Activated CD4-positive, alpha-beta memory T cell treated with anti-CD3 and anti-CD28 coated beads for 36 hours (primary cell): ENCODE measurements at regions of chr17 and their contacts with region 1.

Region 1: GRCh38 chr17:1673041-1673785 is 11.5 kb downstream of the PRPF8 start:
- DNase-seq: peak; percentile 43
- H3K4me3 Mint-ChIP-seq: no peak overlapping the region
- H3K27ac Mint-ChIP-seq: peak overlapping the region; percentile 29
- H3K4me1 Mint-ChIP-seq: peaks cover 19% of the 10 kb centered on the region
- H3K27me3 Mint-ChIP-seq: no peaks in the 10 kb centered on the region

Region 2: DNA sequence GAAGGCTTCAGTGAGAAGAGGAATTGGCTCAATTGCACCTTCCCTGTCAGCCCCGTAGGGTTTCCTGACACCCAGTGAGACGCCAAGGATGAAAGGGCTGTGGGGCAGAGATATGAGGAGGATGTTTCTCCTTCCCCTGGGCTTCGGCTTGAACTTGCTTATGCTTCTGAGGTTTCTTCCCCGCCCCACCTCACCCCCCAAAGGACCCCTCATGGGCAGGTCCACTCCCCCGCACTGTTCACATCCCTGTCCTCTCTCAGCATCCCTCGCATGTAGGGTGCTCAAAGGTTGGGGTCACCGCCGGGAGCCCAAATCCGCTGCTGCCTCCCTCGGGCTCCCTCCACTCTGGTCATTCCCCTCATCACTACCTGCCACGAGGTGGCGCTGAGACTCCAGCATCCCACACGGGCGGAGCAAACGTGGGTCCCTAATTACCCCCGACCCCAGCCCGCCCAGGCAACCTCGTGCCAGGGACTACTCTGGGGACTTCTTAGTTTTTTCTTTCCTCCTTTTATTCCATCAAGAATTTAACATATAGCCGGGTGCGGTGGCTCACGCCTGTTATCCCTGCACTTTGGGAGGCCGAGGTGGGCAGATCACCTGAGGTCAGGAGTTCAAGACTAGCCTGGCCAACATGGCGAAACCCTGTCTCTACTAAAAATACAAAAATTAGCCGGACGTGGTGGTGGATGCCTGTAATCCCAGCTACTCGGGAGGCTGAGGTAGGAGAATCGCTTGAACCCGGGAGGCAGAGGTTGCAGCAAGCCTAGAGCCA is 397.1 kb before region 1 on chr17:
- CTCF ChIA-PET with region 1: no interaction called
- POLR2A ChIA-PET with region 1: no interaction called
- intact Hi-C with region 1: no loop called
- DNase-seq: peak; percentile 79
- H3K4me3 Mint-ChIP-seq: peak overlapping the region; percentile 6
- H3K27ac Mint-ChIP-seq: no peak overlapping the region
- H3K4me1 Mint-ChIP-seq: peaks cover 3% of the 10 kb centered on the region
- H3K27me3 Mint-ChIP-seq: peaks cover 16% of the 10 kb centered on the region

Region 3: DNA sequence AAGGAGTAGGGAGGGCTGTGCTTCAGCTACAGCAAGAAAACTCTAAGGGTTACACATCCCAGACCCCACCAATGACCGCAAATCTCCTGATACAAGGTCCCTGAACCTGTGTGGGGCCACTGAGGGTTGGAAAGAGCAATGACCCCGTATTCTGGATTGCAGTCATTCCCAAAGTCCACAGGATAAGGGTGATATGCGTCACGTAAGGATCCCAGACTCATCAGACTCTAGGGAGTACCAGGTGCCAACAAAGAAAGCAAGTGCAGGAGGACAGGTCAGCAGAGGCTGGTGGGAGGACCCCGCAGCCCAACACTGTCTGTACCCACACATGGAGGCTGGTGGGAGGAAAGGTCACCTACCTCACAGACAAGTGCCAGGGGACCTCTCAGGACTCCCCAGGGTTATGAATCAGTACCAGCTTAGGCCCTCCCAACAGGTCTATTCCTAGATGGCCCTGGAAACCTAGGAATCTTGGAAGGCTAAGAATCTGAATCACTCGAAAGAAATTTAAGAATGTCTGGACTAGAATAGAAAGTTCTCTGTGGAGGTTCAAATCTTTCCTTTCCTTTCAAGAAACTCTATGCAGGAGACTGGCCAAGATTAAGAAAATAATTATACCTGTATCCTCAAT is 126.8 kb before region 1 on chr17:
- CTCF ChIA-PET with region 1: no interaction called
- POLR2A ChIA-PET with region 1: no interaction called
- intact Hi-C with region 1: no loop called
- DNase-seq: no peak
- H3K4me3 Mint-ChIP-seq: no peak overlapping the region
- H3K27ac Mint-ChIP-seq: no peak overlapping the region
- H3K4me1 Mint-ChIP-seq: peaks cover 8% of the 10 kb centered on the region
- H3K27me3 Mint-ChIP-seq: no peaks in the 10 kb centered on the region

Region 4: GRCh38 chr17:1648963-1649843 is 24.0 kb before region 1 on chr17:
- CTCF ChIA-PET with region 1: interaction called, 11 read pairs
- POLR2A ChIA-PET with region 1: no interaction called
- intact Hi-C with region 1: no loop called
- DNase-seq: peak; percentile 95
- H3K4me3 Mint-ChIP-seq: peak overlapping the region; percentile 54
- H3K27ac Mint-ChIP-seq: no peak overlapping the region
- H3K4me1 Mint-ChIP-seq: peaks cover 26% of the 10 kb centered on the region
- H3K27me3 Mint-ChIP-seq: no peaks in the 10 kb centered on the region

Region 5: GRCh38 chr17:1658100-1658499 is 15.1 kb before region 1 on chr17:
- CTCF ChIA-PET with region 1: interaction called, 18 read pairs
- POLR2A ChIA-PET with region 1: no interaction called
- intact Hi-C with region 1: no loop called
- DNase-seq: no peak
- H3K4me3 Mint-ChIP-seq: no peak overlapping the region
- H3K27ac Mint-ChIP-seq: no peak overlapping the region
- H3K4me1 Mint-ChIP-seq: peaks cover 1% of the 10 kb centered on the region
- H3K27me3 Mint-ChIP-seq: no peaks in the 10 kb centered on the region

Region 6: GRCh38 chr17:1684378-1685189 is 11.4 kb after region 1 on chr17 and contains the start of gene PRPF8:
- CTCF ChIA-PET with region 1: interaction called, 19 read pairs
- POLR2A ChIA-PET with region 1: interaction called, 5 read pairs
- intact Hi-C with region 1: no loop called
- DNase-seq: peak; percentile 99
- H3K4me3 Mint-ChIP-seq: peak within 1 kb of the TSS; percentile 99
- H3K27ac Mint-ChIP-seq: peak within 1 kb of the TSS; percentile 95
- H3K4me1 Mint-ChIP-seq: peaks cover 30% of the 10 kb centered on the region
- H3K27me3 Mint-ChIP-seq: no peaks in the 10 kb centered on the region
- total RNA-seq, gene PRPF8: 370 to 378 TPM

Region 7: DNA sequence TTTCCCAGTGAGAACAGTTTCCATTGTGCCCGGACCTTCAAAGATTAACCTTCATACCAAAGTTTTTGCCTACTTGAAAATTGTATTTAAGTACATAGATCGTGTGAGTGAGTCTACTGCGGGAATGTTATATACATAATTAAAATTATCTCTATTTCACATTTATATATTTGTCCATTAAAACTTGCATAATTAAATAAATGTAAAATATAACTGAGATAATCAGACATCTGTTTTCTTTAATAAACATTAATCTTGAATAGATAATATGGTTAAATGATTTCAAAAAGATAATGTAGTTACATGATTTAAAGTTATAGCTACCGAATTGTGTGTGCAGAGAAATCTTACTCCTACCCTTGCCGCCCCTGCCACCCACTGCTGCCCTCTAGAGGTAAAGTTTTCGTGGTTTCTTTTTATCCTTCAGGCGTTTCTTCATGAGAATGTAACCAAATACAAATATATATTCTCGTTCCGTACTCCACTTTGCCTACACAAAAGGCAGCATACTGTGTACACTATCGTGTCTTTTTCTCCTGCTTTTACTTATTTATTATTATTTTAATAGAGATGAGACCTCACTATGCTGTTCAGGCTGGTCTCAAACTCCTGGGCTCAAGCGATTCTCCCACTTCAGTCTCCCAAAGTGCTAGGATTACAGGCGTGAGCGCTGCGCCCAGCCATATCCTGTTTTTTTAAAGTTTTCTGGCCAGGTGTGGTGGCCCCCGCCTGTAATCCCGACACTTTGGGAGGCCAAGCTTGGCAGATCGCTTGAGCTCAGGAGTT is 192.2 kb after region 1 on chr17:
- CTCF ChIA-PET with region 1: interaction called, 10 read pairs
- POLR2A ChIA-PET with region 1: no interaction called
- intact Hi-C with region 1: no loop called
- DNase-seq: peak; percentile 65
- H3K4me3 Mint-ChIP-seq: no peak overlapping the region
- H3K27ac Mint-ChIP-seq: no peak overlapping the region
- H3K4me1 Mint-ChIP-seq: peaks cover 15% of the 10 kb centered on the region
- H3K27me3 Mint-ChIP-seq: no peaks in the 10 kb centered on the region